A549 (cell line): ENCODE measurements at regions of chr11 and their contacts with region 1.

Region 1: GRCh38 chr11:61871158-61871597 is 20.2 kb downstream of the FADS3 start:
- DNase-seq: peak; percentile 82 to 91
- ATAC-seq: peak; percentile 80 to 93
- H3K4me3 ChIP-seq: no peak overlapping the region
- H3K27ac ChIP-seq: peak overlapping the region; percentile 47 to 52; a peak in 5 of 6 replicates
- H3K4me1 ChIP-seq: peaks cover 31% of the 10 kb centered on the region
- CTCF ChIP-seq: peak; percentile 95
- EP300 ChIP-seq: no peak
- POLR2A ChIP-seq: no peak
- RAD21 ChIP-seq: peak; percentile 95 to 97

Region 2: GRCh38 chr11:61783717-61784519 is 87.3 kb before region 1 on chr11:
- CTCF ChIA-PET with region 1: no interaction called
- POLR2A ChIA-PET with region 1: no interaction called
- DNase-seq: no peak
- ATAC-seq: no peak
- H3K4me3 ChIP-seq: no peak overlapping the region
- H3K27ac ChIP-seq: no peak overlapping the region
- H3K4me1 ChIP-seq: no peaks in the 10 kb centered on the region
- CTCF ChIP-seq: no peak
- EP300 ChIP-seq: no peak
- POLR2A ChIP-seq: no peak
- RAD21 ChIP-seq: no peak

Region 3: DNA sequence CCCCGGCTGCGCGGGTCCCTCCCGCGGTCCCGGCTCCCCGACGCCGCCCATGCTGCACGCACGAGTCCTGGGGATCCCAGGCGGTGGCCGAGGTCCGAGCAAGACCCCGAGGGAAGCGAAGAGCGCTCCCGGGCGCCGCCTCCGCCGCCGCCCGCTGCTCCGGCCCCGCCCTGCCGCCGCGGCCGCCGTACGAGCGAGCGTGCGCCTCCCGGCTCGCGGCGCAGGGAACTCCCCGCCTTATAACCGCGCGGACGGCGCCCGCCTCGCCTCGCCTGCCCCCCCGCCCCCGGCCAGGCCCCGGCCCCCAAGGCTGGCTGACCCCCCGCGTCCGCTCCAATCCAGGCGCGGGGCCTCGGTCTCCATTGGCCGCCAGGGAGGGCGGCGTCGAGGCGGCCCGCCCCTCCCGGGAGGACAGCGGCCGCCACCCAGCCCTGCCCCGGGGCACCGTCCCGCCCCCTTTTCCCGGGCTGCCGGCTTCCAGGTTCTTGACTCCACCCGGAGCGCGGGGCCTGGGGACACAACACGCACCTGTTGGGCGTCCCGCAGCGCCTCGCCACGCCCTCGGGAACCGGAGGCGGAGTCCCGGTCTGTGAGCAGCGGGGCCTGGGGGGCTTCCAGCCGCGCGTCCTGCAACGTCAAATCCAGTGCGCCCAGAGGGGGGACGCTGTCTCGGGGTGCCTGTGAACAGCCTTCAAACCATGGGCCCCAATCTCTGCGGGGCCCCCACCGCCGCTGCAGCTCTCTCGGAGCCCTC is 20.3 kb after region 1 on chr11 and contains the start of gene FADS3:
- CTCF ChIA-PET with region 1: interaction called, 220 read pairs
- POLR2A ChIA-PET with region 1: no interaction called
- DNase-seq: peak; percentile 74 to 76
- ATAC-seq: peak; percentile 79 to 87
- H3K4me3 ChIP-seq: peak within 1 kb of the TSS; percentile 73
- H3K27ac ChIP-seq: peak within 1 kb of the TSS; percentile 82 to 91
- H3K4me1 ChIP-seq: peaks cover 39% of the 10 kb centered on the region
- CTCF ChIP-seq: no peak; the same call in 2 of the 3 replicates
- EP300 ChIP-seq: no peak
- POLR2A ChIP-seq: peak; percentile 65
- RAD21 ChIP-seq: no peak
- polyA plus RNA-seq, gene FADS3: 17.5 and 22.3 TPM in 2 replicates

Region 4: DNA sequence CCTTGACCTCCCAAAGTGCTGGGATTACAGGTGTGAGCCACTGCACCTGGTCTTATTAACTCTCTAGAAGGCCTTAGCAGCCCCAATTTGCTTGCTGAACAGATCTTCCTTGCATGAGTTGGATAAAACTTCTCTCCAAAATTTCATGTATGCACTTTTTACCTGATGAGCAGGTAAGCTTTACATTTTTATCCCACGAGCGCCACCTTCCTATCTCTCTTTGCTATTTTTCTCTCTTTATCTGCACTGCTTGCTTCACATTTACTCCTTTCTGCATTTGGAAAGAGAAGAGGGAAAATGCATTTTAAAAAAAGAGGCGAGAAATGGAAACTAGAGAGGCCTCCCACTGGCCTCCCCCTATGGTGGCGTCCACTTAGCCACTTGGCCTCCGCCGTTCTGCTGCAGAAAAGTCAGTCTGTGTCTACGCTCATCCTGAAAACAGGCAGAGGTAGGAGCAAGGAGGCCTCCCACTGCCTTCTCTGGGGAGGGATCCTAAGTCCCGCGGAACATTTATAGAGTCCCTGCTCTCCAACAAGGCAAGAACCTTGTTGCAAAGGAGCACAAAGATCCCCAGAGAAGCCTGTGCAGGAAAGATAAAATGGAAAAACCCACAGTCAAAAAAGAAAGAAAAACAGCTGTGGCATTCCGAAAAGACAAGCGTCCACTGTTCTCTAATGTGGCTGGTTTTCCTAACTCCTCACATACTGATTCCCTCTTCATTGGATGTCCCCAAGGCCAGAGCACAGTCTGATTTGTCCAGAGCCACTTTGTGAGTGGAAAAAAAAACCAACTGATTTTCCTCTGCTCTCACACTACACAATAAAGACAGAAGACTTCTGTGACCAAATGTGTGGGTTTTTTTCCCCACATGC is 190.4 kb after region 1 on chr11:
- CTCF ChIA-PET with region 1: interaction called, 12 read pairs
- POLR2A ChIA-PET with region 1: no interaction called
- DNase-seq: no peak
- ATAC-seq: no peak
- H3K4me3 ChIP-seq: no peak overlapping the region
- H3K27ac ChIP-seq: no peak overlapping the region
- H3K4me1 ChIP-seq: no peaks in the 10 kb centered on the region
- CTCF ChIP-seq: no peak
- EP300 ChIP-seq: no peak
- POLR2A ChIP-seq: no peak
- RAD21 ChIP-seq: no peak

Region 5: GRCh38 chr11:62337303-62338181 is 466.4 kb after region 1 on chr11 and contains the start of gene ASRGL1:
- CTCF ChIA-PET with region 1: no interaction called
- POLR2A ChIA-PET with region 1: no interaction called
- DNase-seq: peak; percentile 82 to 87
- ATAC-seq: peak; percentile 89 to 95
- H3K4me3 ChIP-seq: peak within 1 kb of the TSS; percentile 79
- H3K27ac ChIP-seq: peak within 1 kb of the TSS; percentile 76 to 88
- H3K4me1 ChIP-seq: no peaks in the 10 kb centered on the region
- CTCF ChIP-seq: no peak
- EP300 ChIP-seq: no peak
- POLR2A ChIP-seq: peak; percentile 50
- RAD21 ChIP-seq: no peak
- polyA plus RNA-seq, gene ASRGL1: 13.6 and 19.5 TPM in 2 replicates